Dorsolateral prefrontal cortex (tissue), 120 donors: ENCODE measurements at regions of chr16 and their contacts with region 1.

Region 1: DNA sequence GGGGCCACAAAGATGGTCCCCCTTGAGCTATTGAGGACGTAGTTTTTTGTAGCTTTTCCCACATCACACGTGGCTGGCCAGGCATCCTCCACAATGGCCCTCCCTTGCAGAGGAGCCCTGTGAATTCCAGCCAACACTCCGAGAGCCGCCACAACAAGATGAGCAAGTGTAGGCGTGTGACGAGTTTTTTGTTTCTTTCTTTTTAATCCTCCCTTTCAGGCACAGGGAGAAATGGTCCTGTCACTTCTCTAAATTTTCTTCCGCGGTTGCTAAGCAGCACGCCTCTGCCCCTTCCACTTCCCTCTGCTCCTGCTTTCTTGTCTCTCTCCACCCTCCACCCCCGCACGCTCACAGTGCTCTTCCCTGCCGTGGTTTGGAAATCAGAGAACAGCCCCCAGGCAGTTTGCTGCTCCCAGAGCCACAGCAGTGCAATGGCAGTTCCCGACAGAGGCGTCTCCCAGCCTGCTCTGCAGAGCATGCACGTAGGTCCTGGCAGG is 68.0 kb upstream of the MRTFB start:
- DNase-seq: peak in 9 of 10 donors; percentile 30 to 92 (median 84)
- H3K4me3 ChIP-seq: peak overlapping the region in 56 of 59 donors; percentile 1 to 64 (median 37)
- H3K27ac ChIP-seq: peak overlapping the region in 57 of 59 donors; percentile 8 to 87 (median 75)
- H3K27me3 ChIP-seq: peaks cover 0 to 3% (median 0%) of the 10 kb centered on the region in 45 donors
- CTCF ChIP-seq: peak in 2 of 56 donors; percentile 11 to 20

Region 2: GRCh38 chr16:13176711-13177110 is 826.4 kb before region 1 on chr16:
- intact Hi-C with region 1: no loop called
- DNase-seq: no peak
- H3K4me3 ChIP-seq: no peak overlapping the region
- H3K27ac ChIP-seq: no peak overlapping the region
- H3K27me3 ChIP-seq: peaks cover 0 to 12% (median 0%) of the 10 kb centered on the region in 45 donors
- CTCF ChIP-seq: no peak

Region 3: GRCh38 chr16:13793841-13794409 is 209.2 kb before region 1 on chr16:
- intact Hi-C with region 1: no loop called
- DNase-seq: peak in 8 of 10 donors; percentile 27 to 59 (median 50)
- H3K4me3 ChIP-seq: no peak overlapping the region
- H3K27ac ChIP-seq: peak overlapping the region in 1 of 59 donors; percentile 42
- H3K27me3 ChIP-seq: peaks cover 0 to 33% (median 0%) of the 10 kb centered on the region in 45 donors
- CTCF ChIP-seq: peak in 2 of 56 donors; percentile 7 to 12

Region 4: GRCh38 chr16:14070877-14071575 is 67.9 kb after region 1 on chr16 and contains the start of gene MRTFB:
- intact Hi-C with region 1: loop called in 1 of 2 experiments (anchors 5 kb)
- DNase-seq: peak in 8 of 10 donors; percentile 46 to 84 (median 58)
- H3K4me3 ChIP-seq: peak within 1 kb of the TSS; percentile 61 to 96 (median 84)
- H3K27ac ChIP-seq: peak within 1 kb of the TSS in 58 of 59 donors; percentile 35 to 93 (median 83)
- H3K27me3 ChIP-seq: no peaks in the 10 kb centered on the region
- CTCF ChIP-seq: no peak
- total RNA-seq, gene MRTFB: 76.4 to 314 (median 223) TPM

Region 5: GRCh38 chr16:14121142-14121541 is 118.0 kb after region 1 on chr16:
- intact Hi-C with region 1: loop called in 1 of 2 experiments (anchors 5 kb)
- DNase-seq: no peak
- H3K4me3 ChIP-seq: no peak overlapping the region
- H3K27ac ChIP-seq: peak overlapping the region in 26 of 59 donors; percentile 1 to 80 (median 36)
- H3K27me3 ChIP-seq: no peaks in the 10 kb centered on the region
- CTCF ChIP-seq: no peak

Region 6: GRCh38 chr16:14186007-14186794 is 183.1 kb after region 1 on chr16:
- intact Hi-C with region 1: loop called in 1 of 2 experiments (anchors 2 kb)
- DNase-seq: peak in 8 of 10 donors; percentile 38 to 78 (median 68)
- H3K4me3 ChIP-seq: peak overlapping the region; percentile 31 to 77 (median 61)
- H3K27ac ChIP-seq: peak overlapping the region in 58 of 59 donors; percentile 11 to 94 (median 84)
- H3K27me3 ChIP-seq: no peaks in the 10 kb centered on the region
- CTCF ChIP-seq: peak in 51 of 56 donors; percentile 16 to 64 (median 44)

Region 7: GRCh38 chr16:14364386-14365204 is 361.5 kb after region 1 on chr16:
- intact Hi-C with region 1: no loop called
- DNase-seq: peak in 2 of 10 donors; percentile 12 to 59
- H3K4me3 ChIP-seq: no peak overlapping the region
- H3K27ac ChIP-seq: no peak overlapping the region
- H3K27me3 ChIP-seq: no peaks in the 10 kb centered on the region
- CTCF ChIP-seq: no peak